Activated CD4-positive, alpha-beta memory T cell treated with anti-CD3 and anti-CD28 coated beads for 36 hours (primary cell): ENCODE measurements at regions of chr18 and their contacts with region 1.

Region 1: DNA sequence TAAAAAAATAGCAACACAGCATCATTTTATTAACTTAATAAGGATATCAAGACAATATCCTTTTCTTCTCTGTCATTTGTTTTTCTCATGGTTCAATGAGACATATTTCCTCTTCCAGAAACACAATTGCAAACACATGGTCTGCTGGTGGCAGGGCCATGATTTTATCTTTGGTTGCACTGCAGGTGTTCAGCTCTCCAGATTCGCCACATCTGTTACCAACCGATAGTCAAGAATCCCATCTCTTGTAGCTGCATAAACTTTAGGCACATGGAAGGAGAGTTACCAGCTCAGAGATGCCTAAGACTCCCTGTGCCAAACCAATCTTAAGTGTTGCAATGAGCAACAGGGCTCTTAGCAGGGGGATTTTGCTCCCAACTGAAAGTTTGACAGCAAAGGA is 1303.2 kb upstream of the CELF4 start:
- DNase-seq: no peak
- H3K4me3 Mint-ChIP-seq: no peak overlapping the region
- H3K27ac Mint-ChIP-seq: no peak overlapping the region
- H3K4me1 Mint-ChIP-seq: no peaks in the 10 kb centered on the region
- H3K27me3 Mint-ChIP-seq: no peaks in the 10 kb centered on the region

Region 2: DNA sequence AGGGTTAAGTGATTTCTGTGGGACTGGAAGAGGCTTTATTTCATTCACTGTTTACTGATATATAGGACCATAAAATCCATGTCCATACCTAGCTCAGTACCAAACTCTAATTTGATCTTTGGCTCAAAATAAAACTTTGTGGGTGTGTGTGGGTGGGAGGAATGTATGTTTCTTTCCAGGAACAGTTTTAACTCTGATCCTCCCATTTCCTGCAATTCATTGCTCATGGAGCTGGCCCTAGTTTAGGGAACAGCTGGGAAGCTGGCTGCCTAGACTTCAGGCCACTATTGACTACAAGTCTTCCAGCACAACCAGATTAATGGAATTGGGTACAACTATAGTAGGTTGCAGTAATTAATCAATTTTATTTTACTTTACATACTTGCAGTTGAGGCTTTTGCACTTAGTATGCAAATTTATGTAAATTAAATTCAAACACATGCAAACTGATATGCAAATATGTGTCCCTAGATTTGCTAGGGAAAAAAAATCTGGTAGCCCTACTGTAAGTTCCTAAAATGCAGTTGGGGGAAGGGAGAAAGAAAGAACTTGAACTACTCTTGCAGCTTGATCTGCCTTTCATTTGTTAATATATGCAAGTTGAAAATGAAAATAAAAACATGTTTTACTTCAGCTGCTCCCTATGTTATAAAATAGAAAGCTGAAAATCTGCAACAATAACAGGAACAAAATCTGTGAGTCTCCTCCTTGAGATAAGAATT is 232.9 kb before region 1 on chr18:
- CTCF ChIA-PET with region 1: no interaction called
- POLR2A ChIA-PET with region 1: no interaction called
- intact Hi-C with region 1: no loop called
- DNase-seq: no peak
- H3K4me3 Mint-ChIP-seq: no peak overlapping the region
- H3K27ac Mint-ChIP-seq: no peak overlapping the region
- H3K4me1 Mint-ChIP-seq: no peaks in the 10 kb centered on the region
- H3K27me3 Mint-ChIP-seq: no peaks in the 10 kb centered on the region

Region 3: GRCh38 chr18:38810789-38811188 is 58.0 kb before region 1 on chr18:
- CTCF ChIA-PET with region 1: no interaction called
- POLR2A ChIA-PET with region 1: no interaction called
- intact Hi-C with region 1: loop called (anchors 5 kb)
- DNase-seq: no peak
- H3K4me3 Mint-ChIP-seq: no peak overlapping the region
- H3K27ac Mint-ChIP-seq: no peak overlapping the region
- H3K4me1 Mint-ChIP-seq: no peaks in the 10 kb centered on the region
- H3K27me3 Mint-ChIP-seq: peaks cover 1% of the 10 kb centered on the region

Region 4: GRCh38 chr18:38883111-38883510 is 14.4 kb after region 1 on chr18:
- CTCF ChIA-PET with region 1: no interaction called
- POLR2A ChIA-PET with region 1: no interaction called
- intact Hi-C with region 1: no loop called
- DNase-seq: no peak
- H3K4me3 Mint-ChIP-seq: no peak overlapping the region
- H3K27ac Mint-ChIP-seq: no peak overlapping the region
- H3K4me1 Mint-ChIP-seq: no peaks in the 10 kb centered on the region
- H3K27me3 Mint-ChIP-seq: no peaks in the 10 kb centered on the region

Region 5: DNA sequence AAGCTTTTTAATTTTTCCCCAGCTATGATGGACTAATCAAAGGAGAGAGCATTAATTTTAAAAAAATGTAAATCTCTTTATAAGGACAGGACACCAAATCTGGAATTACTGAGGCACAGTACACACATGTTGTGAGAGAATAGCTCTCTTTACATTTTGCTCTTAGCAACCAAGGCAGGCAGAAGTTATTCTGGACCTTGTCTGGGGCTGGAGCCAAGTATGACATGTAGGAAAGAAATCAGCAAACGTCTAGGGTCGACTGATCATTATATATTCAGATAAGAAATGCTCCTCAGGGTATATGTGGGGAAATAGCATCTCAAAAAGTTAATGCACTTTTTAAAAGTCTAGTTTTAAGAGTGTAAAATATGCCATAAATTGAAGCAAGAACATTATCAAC is 26.8 kb after region 1 on chr18:
- CTCF ChIA-PET with region 1: no interaction called
- POLR2A ChIA-PET with region 1: no interaction called
- intact Hi-C with region 1: no loop called
- DNase-seq: no peak
- H3K4me3 Mint-ChIP-seq: no peak overlapping the region
- H3K27ac Mint-ChIP-seq: no peak overlapping the region
- H3K4me1 Mint-ChIP-seq: no peaks in the 10 kb centered on the region
- H3K27me3 Mint-ChIP-seq: no peaks in the 10 kb centered on the region